ENCODE measurements at regions of chr10 and their contacts with region 1.

Region 1: DNA sequence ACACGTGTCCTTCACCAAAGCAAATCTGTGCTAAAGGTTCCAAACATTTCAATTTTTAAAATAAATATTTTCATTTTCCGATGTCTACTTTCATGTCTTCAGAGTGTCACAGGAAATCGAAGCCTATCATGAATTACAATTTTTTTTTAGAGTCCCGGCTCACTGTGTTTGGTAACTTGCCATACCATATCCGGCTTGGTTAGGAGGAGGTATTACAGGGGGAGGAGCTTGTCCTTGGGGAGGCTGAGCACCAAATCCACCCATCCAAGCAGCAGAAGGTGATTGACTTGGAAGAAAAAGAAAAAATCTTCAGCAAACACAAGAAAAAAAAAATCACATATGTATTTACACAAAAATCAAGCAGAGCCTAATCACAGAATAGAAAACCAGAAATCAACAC is 21.3 kb downstream of the TIAL1 start:
- DNase-seq: peak; percentile 56
- ATAC-seq: peak; percentile 92
- H3K4me3 Mint-ChIP-seq: no peak overlapping the region
- H3K27ac Mint-ChIP-seq: peak overlapping the region; percentile 65
- H3K4me1 Mint-ChIP-seq: peaks cover 28% of the 10 kb centered on the region
- H3K27me3 Mint-ChIP-seq: no peaks in the 10 kb centered on the region

Region 2: GRCh38 chr10:119602241-119603095 is 27.0 kb after region 1 on chr10:
- CTCF ChIA-PET with region 1: interaction called, 11 read pairs
- POLR2A ChIA-PET with region 1: no interaction called
- DNase-seq: peak; percentile 66
- ATAC-seq: peak; percentile 89
- H3K4me3 Mint-ChIP-seq: no peak overlapping the region
- H3K27ac Mint-ChIP-seq: no peak overlapping the region
- H3K4me1 Mint-ChIP-seq: peaks cover 10% of the 10 kb centered on the region
- H3K27me3 Mint-ChIP-seq: peaks cover 3% of the 10 kb centered on the region

Measured in activated CD8-positive, alpha-beta T cell treated with anti-CD3 and anti-CD28 coated beads, Interleukin-2, amount 10 ng/mL, durations not matched to agents 7 days and 5 days (primary cell).